ENCODE measurements at regions of chr3 and their contacts with region 1.

Region 1: DNA sequence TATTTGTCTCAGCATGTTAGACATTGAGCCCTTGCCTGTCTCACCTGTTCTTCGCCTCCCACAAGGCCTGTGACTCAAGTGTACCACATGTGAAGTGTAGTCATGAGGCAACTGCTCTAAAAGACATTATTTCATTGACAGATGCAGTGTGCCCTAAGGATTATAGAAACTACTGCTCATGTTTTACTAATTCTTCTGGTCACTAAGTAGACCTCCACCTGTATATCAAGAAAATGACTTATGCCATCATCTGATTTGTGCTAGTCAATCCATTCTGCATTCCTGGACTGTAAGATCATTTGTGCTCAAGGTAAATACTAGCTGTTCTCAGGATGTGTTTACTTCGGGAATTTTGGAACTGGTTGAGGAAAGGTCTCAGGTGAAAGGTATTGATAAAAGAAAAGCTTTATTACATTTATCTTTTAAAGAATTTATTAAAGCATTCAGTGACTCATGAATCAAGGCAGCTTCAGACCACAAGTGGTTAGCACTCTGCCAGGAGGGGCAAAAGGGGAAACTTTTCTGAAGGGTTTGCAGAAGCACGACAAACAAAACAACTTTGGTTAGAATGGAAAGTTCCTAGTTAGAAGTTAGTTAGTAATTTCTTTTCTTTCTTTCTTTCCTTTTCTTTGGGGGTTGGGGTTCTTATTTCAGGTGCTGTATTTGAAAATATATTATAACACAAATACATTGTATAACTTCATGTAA is 465.3 kb upstream of the CBLB start:
- DNase-seq: peak; percentile 31
- H3K4me3 Mint-ChIP-seq: peak overlapping the region; percentile 63
- H3K27ac Mint-ChIP-seq: peak overlapping the region; percentile 92
- H3K4me1 Mint-ChIP-seq: peaks cover 89% of the 10 kb centered on the region
- H3K27me3 Mint-ChIP-seq: no peaks in the 10 kb centered on the region

Region 2: DNA sequence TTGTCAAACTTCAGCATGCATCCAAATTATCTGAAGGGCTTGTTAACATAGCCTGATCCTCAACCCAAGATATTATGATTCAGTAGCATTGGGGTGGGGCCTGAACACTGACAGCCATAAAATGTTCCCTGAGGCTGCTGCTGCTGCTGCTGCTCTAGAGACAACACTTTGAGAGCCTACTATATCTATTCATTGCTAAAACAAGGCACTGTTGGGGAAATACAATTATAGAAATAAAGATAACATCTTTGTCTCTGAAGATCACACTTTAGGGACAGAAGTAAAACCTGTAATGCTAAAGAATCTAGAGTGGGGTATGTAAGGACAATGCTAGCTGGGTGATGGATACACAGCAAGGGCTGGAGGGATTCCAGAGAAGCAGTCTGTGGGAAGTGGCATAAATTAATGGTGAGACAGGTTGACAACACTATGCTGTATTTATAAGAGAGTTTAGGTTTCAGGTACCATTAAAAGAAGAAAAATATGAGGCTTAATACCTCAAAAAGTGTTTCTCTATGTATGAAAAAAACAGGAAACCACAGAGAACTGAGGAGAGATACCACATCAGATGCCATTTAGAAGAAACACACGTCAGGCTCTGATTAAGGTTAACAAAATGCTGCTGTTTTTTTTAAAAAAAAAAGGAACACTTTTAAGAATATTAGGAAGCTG is 581.2 kb before region 1 on chr3:
- intact Hi-C with region 1: loop called (anchors 2 kb)
- DNase-seq: peak; percentile 24
- H3K4me3 Mint-ChIP-seq: peak overlapping the region; percentile 57
- H3K27ac Mint-ChIP-seq: peak overlapping the region; percentile 98
- H3K4me1 Mint-ChIP-seq: peaks cover 88% of the 10 kb centered on the region
- H3K27me3 Mint-ChIP-seq: no peaks in the 10 kb centered on the region

Region 3: GRCh38 chr3:105876780-105877327 is 457.2 kb before region 1 on chr3:
- intact Hi-C with region 1: loop called (anchors 1 kb)
- DNase-seq: no peak
- H3K4me3 Mint-ChIP-seq: peak overlapping the region; percentile 64
- H3K27ac Mint-ChIP-seq: peak overlapping the region; percentile 80
- H3K4me1 Mint-ChIP-seq: peaks cover 35% of the 10 kb centered on the region
- H3K27me3 Mint-ChIP-seq: no peaks in the 10 kb centered on the region

Region 4: DNA sequence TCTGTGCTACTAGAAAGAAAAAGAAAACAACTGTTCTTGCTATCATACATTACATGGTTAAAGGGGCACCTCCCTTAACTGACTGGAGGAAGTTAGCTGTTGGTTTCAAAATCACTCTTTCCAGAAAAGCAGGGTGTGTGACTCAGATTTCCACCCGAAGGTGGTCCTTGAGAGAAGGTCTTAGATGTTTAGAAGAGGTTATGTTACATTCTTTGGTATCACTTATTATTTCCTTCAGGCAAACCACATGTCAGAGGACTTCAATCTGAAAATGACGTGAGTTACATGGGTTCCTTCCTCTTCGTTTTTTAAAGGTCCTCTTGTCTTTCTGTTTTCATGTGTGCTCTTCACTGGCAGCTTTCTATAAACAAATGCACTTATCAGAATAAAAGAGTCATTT is 157.3 kb before region 1 on chr3:
- intact Hi-C with region 1: loop called (anchors 1 kb)
- DNase-seq: peak; percentile 68
- H3K4me3 Mint-ChIP-seq: peak overlapping the region; percentile 75
- H3K27ac Mint-ChIP-seq: peak overlapping the region; percentile 92
- H3K4me1 Mint-ChIP-seq: peaks cover 70% of the 10 kb centered on the region
- H3K27me3 Mint-ChIP-seq: no peaks in the 10 kb centered on the region

Region 5: DNA sequence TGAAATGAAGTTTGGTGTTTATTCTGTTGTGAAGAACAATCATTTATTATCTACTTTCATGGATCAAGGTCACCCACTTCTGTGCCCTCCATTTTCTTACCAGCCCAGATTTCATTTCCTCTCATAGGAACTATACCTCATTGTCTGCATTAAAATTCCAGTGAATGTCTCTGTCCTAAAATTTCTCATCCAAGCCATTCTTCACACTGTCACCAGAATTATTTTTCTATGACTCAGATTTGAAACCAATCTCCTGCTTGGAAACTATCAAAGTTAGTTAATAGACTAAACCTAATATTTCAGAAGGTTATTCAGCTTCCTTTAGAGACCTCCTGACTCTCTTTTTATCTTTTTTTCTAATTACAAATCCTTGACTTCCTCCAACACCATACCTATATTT is 101.1 kb before region 1 on chr3:
- intact Hi-C with region 1: loop called (anchors 1 kb)
- DNase-seq: no peak
- H3K4me3 Mint-ChIP-seq: no peak overlapping the region
- H3K27ac Mint-ChIP-seq: peak overlapping the region; percentile 46
- H3K4me1 Mint-ChIP-seq: peaks cover 46% of the 10 kb centered on the region
- H3K27me3 Mint-ChIP-seq: no peaks in the 10 kb centered on the region

Region 6: GRCh38 chr3:106296062-106296461 is 38.0 kb before region 1 on chr3:
- intact Hi-C with region 1: no loop called
- DNase-seq: no peak
- H3K4me3 Mint-ChIP-seq: no peak overlapping the region
- H3K27ac Mint-ChIP-seq: no peak overlapping the region
- H3K4me1 Mint-ChIP-seq: peaks cover 41% of the 10 kb centered on the region
- H3K27me3 Mint-ChIP-seq: no peaks in the 10 kb centered on the region

Region 7: DNA sequence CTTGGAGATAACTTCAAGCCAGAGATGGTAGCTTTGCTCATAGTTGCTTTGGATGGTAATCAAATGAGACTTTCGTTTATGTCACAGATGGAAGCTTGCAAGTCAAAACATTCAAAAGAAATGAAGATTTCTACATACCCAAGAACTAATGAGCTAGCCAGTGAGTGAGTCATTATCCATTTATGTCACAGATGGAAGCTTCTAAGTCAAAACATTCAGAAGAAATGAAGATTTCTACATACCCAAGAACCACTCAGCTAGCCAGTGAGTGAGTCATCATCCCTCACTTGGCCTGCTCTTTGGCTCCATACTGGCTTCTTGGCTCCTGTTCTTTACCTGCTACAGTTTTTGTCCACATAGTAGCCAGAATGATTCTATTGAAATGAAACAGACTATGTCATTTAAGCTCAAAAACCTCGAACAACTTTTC is 94.5 kb after region 1 on chr3:
- intact Hi-C with region 1: loop called (anchors 1 kb)
- DNase-seq: no peak
- H3K4me3 Mint-ChIP-seq: no peak overlapping the region
- H3K27ac Mint-ChIP-seq: peak overlapping the region; percentile 93
- H3K4me1 Mint-ChIP-seq: peaks cover 57% of the 10 kb centered on the region
- H3K27me3 Mint-ChIP-seq: no peaks in the 10 kb centered on the region

Region 8: DNA sequence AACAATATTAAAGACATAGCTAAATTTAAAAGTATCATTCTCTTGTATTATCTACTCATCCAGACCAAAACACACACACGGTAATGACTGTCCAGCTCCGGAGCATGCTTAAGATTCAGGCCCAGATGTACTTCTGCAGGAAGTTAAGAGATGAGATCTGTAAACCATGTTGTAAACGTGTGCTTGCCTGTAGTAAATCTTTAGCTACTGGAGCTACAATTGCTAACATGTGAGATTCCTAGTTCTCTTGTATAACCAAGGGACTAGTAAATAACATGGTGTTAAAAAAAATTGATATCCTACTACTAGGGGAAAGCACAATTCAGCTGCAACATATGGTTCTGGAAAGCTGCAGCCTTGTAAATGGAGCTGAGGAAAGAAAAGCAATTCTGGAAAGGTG is 391.5 kb after region 1 on chr3:
- intact Hi-C with region 1: no loop called
- DNase-seq: no peak
- H3K4me3 Mint-ChIP-seq: no peak overlapping the region
- H3K27ac Mint-ChIP-seq: no peak overlapping the region
- H3K4me1 Mint-ChIP-seq: no peaks in the 10 kb centered on the region
- H3K27me3 Mint-ChIP-seq: peaks cover 2% of the 10 kb centered on the region

Region 9: DNA sequence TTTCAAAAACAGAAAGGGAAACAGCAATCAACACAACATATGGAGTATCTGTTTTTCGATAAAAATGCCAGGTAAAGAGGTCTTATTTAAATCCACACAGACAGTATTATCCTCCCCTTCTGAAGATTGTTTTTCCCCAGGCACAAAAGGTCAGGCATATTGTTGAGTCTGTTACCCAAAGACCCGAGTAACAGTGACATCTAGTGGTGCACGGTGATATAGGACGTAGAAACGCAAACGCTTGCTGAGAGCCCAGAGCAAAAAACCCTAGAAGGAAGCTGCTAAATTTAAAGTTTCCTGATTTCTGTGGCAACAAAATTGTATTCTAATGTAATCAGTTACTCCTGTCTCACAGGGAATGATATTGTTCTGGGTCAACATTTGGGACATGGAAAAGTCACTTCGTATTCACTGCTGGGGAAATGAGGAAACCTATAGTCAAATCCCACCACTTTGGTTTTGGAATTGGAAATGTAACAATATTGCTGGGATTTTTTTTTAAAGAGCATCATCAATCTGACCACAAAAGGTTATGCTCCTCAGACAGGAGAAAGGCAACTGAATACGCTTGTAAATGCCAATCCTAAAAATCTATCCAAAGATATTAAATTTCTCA is 730.5 kb after region 1 on chr3:
- intact Hi-C with region 1: loop called (anchors 5 kb)
- DNase-seq: peak; percentile 29
- H3K4me3 Mint-ChIP-seq: no peak overlapping the region
- H3K27ac Mint-ChIP-seq: no peak overlapping the region
- H3K4me1 Mint-ChIP-seq: peaks cover 24% of the 10 kb centered on the region
- H3K27me3 Mint-ChIP-seq: peaks cover 5% of the 10 kb centered on the region

Measured in activated T-helper 1 cell treated with anti-CD3 and anti-CD28 coated beads, Interleukin-12 subunit alpha, Interleukin-12 subunit beta, Interleukin-2, Interleukin-4 antibody, amounts not matched to agents 30 ng/mL and 10 ng/mL and 1 ng/mL, durations not matched to agents 14 hours and 24 hours and 36 hours (primary cell).